OCI-LY7 (cell line): ENCODE measurements at regions of chr3 and their contacts with region 1.

Region 1: DNA sequence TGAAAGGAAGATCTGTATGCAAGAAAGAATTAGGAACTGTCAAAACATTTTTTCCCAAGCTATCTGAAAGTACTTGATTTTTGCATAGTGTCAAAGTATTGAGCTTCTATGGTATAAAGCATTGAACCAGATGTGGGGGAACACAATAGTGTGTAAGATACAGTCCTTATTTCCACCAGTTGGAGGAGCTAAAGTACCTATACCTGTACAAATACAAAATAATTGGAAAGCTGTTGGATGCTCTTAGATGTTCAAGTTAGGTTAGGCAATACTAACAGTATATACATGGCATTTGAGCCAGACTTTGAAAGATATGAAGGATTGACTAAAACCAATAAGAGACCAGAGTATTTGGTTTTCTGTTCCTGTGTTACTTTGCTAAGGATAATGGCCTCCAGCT is 148.3 kb downstream of the B3GALNT1 start:
- DNase-seq: peak; percentile 42
- H3K4me3 ChIP-seq: no peak overlapping the region
- H3K27ac ChIP-seq: no peak overlapping the region
- H3K4me1 ChIP-seq: no peaks in the 10 kb centered on the region
- CTCF ChIP-seq: peak; percentile 75

Region 2: DNA sequence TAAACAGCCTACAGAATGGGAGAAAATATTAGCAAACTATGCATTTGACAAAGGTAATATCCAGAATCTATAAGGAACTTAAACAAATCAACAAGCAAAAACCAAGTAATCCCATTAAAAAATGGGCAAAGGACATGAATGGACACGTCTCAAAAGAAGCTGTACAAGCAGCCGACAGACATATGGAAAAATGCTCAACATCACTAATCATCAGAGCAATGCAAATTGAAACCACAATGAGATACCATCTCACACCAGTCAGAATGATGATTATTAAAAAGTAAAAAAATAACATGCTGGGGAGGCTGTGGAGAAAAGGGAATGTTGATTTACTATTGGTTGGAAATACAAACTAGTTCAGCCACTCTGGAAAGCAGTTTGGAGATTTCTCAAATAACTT is 231.5 kb before region 1 on chr3:
- CTCF ChIA-PET with region 1: no interaction called
- POLR2A ChIA-PET with region 1: no interaction called
- intact Hi-C with region 1: no loop called
- DNase-seq: no peak
- H3K4me3 ChIP-seq: no peak overlapping the region
- H3K27ac ChIP-seq: no peak overlapping the region
- H3K4me1 ChIP-seq: no peaks in the 10 kb centered on the region
- CTCF ChIP-seq: no peak

Region 3: GRCh38 chr3:161083131-161083530 is 126.3 kb after region 1 on chr3:
- CTCF ChIA-PET with region 1: no interaction called
- POLR2A ChIA-PET with region 1: no interaction called
- intact Hi-C with region 1: no loop called
- DNase-seq: no peak
- H3K4me3 ChIP-seq: no peak overlapping the region
- H3K27ac ChIP-seq: no peak overlapping the region
- H3K4me1 ChIP-seq: peaks cover 24% of the 10 kb centered on the region
- CTCF ChIP-seq: no peak

Region 4: DNA sequence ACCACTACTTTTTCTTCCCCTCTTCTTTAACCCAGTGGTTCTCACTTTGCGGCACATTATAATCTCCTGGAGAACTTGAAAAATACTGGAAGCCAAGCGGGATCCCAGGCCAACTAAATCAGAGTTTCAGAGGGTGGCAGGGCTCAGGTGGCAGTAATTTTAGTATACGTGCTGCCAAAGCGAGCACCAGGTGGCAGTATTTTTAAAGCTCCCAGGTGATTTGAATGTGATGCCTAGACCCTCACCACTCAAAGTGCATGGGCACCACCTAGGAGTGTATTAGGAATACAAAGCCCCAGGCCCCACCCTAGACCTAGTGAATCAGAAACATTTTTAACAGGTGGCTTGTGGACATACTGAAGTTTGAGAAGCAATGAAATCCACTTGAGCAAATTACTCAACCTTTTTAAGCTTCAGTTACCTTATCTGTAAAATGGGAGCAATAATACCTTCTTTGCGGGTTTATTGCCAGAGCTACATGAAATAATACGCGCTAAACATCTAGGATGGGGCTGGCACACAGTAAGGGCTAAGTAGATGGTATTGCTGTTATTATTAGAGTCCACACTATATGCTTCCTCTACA is 140.1 kb after region 1 on chr3:
- CTCF ChIA-PET with region 1: no interaction called
- POLR2A ChIA-PET with region 1: no interaction called
- intact Hi-C with region 1: loop called (anchors 2 kb)
- DNase-seq: peak; percentile 62
- H3K4me3 ChIP-seq: no peak overlapping the region
- H3K27ac ChIP-seq: no peak overlapping the region
- H3K4me1 ChIP-seq: peaks cover 4% of the 10 kb centered on the region
- CTCF ChIP-seq: peak; percentile 84

Region 5: GRCh38 chr3:161203485-161204098 is 246.8 kb after region 1 on chr3:
- CTCF ChIA-PET with region 1: no interaction called
- POLR2A ChIA-PET with region 1: no interaction called
- intact Hi-C with region 1: loop called (anchors 2 kb)
- DNase-seq: no peak
- H3K4me3 ChIP-seq: no peak overlapping the region
- H3K27ac ChIP-seq: no peak overlapping the region
- H3K4me1 ChIP-seq: no peaks in the 10 kb centered on the region
- CTCF ChIP-seq: no peak